Left colon (tissue), 2 donors: ENCODE measurements at regions of chr9 and their contacts with region 1.

Region 1: DNA sequence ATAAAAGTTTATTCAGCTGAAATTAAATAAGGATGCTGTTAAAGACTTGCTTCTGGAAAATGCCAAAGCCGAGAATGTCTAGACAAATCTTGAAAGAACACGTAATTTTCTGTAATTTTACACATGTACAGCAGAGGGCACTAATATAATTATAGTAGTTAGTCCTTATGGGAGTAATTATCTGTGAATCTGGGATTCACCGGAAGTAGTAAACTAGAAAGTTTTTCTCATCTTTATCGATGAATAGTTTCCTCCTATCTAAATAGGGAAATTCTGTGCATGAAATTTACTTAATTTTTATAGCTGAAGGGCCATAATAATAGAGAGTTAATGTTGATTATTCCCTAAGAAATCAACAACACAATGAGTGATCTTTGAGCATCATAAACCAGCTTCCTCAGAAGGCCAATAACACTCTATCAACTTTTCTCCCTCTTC is 18.4 kb upstream of the CNTLN start:
- DNase-seq: no peak
- ATAC-seq: peak; percentile 50

Region 2: DNA sequence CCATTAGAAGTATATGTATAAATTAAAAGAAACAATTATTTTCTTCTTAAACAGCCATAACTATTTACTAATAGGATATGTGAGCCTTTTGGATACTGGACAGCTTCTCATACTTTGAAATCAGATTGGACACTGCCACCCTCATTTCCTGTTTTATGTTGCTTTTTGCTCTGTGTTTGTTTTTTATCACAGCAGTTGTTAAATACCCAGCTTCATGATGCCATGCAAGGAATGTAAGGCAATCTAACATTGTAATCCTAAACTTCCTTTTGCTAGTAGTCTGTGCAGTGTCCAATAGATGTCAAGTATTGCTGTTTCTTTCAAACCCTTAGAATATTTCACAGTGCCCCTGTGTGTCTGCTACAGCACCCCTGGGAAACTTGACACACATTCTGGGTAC is 74.7 kb after region 1 on chr9:
- intact Hi-C with region 1: no loop called
- DNase-seq: no peak
- ATAC-seq: no peak

Region 3: DNA sequence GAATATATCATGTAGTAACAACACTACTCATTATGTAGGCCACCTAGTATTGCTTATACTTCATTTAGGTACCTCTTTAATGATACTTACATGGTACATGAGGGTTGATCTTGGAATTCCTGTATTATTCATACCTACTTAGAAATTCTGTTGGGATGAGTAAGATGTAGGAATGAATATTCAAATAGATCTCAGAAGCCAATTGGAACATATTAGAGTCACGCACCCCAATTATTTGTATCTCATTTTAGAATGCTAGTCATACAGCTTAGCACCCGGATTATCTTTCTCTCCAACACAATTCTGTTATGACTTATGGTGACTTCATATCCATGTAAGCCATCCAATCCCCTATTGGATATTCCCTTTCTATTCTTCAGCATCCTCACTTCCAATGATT is 355.7 kb after region 1 on chr9:
- intact Hi-C with region 1: loop called in 1 of 2 experiments (anchors 5 kb)
- DNase-seq: no peak
- ATAC-seq: no peak